ENCODE measurements at regions of chr7 and their contacts with region 1.

Region 1: DNA sequence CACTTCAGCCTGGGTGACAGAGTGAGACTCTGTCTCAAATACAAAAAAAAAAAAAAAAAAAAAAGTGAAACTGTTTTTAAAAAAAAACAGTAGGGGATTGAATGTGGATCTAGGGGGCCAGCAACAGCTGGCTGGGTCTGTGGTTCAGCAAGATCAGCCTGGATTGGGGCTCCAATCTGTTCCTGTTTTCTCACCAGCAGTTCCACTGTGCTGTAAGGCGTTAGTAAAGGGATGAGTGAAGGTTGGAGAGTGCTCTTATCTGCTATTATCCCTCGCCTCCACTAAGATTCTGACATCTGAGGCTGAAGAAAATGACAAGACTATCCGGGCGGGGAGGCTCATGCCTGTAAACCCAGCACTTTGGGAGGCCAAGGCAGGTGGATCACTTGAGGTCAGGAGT is 41.6 kb upstream of the GTF2IRD1 start:
- DNase-seq: no peak
- ATAC-seq: no peak
- H3K4me3 Mint-ChIP-seq: no peak overlapping the region
- H3K27ac Mint-ChIP-seq: no peak overlapping the region
- H3K4me1 Mint-ChIP-seq: no peaks in the 10 kb centered on the region
- H3K27me3 Mint-ChIP-seq: no peaks in the 10 kb centered on the region

Region 2: DNA sequence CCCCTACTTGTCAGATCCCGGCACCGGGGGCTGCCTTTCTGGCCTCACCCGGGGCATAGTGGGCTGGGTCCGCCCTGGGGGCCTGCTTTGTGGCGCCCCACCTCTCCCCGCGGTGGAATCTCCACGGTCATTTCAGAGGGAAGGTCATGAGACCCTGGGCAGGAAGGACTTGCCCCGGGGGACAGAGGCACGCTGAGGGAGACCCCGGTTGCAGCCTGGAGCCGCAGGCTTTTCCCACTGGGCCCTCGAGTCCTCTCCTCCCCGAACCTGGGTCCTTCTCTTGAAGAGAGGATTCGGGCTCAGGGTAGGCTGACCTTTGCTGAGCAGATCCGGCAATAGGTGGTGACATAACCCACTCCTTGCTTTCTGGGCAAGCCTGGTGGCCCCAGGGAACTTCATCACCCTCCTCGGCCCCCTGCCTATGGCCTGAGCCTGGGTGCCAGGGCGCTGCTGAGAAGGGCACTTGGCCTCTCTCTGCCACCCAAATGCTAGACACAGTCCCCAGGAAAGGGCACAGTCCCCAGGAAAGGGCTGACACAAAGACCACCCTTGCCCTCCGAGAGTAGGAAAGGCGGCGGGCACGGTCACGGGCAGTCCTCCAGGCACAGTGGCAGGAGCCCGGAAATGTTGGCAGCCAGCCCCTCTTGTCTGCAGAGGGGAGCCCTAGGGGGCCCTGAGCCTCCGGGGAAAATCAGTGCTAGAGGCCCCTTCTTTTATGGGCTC is 1047.9 kb before region 1 on chr7:
- CTCF ChIA-PET with region 1: no interaction called
- POLR2A ChIA-PET with region 1: no interaction called
- intact Hi-C with region 1: no loop called
- DNase-seq: no peak
- ATAC-seq: no peak
- H3K4me3 Mint-ChIP-seq: no peak overlapping the region
- H3K27ac Mint-ChIP-seq: no peak overlapping the region
- H3K4me1 Mint-ChIP-seq: no peaks in the 10 kb centered on the region
- H3K27me3 Mint-ChIP-seq: peaks cover 3% of the 10 kb centered on the region

Region 3: DNA sequence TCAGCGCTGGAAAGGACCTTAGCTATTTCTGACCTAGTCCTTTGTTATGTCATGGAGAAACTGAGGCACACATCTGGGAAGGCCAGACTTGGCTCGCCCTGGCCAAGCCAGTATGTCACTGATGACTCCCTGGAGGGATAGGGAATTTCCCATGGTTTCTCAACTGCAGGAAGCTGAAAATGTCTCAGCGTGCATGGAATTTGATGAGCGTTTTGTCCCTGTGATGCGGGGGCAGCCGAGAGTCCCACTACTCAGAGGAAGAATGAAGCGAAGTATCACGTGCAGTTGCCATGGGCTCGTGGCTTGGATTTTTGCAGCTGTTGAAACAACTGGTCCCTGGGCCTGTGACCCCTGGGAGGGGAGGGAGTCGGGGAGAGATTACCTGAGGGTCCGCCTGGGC is 78.0 kb before region 1 on chr7:
- CTCF ChIA-PET with region 1: no interaction called
- POLR2A ChIA-PET with region 1: no interaction called
- intact Hi-C with region 1: no loop called
- DNase-seq: no peak
- ATAC-seq: no peak
- H3K4me3 Mint-ChIP-seq: no peak overlapping the region
- H3K27ac Mint-ChIP-seq: no peak overlapping the region
- H3K4me1 Mint-ChIP-seq: no peaks in the 10 kb centered on the region
- H3K27me3 Mint-ChIP-seq: no peaks in the 10 kb centered on the region

Region 4: DNA sequence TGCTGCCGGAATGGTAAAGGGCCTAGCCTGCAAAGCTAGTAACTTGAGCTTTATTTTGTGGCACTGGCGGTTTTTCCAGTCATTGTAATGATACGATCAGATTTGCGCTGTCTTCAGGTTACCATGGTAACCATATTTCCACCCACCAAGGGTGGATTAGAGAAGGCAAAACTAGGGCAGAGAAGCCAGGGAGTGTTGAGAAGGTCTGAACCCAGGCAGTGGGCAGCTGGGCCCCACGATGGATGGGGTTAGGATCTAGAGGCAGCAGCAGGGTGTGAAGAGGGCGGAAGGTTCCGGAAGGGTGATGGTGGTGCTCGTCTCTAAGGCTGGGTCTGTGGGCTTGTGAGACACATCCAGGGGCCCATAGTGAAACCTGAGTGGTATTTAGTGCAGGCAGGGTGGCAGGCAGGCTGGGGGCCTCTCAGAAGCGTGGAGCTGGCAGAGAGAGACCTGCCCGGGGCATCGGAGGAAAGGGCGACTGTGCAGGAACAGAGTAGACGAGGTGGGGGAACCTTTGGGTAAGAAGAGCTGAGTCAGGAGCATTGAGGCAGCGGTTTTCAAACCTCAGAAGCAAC is 157.5 kb after region 1 on chr7:
- CTCF ChIA-PET with region 1: interaction called, 18 read pairs
- POLR2A ChIA-PET with region 1: no interaction called
- intact Hi-C with region 1: loop called (anchors 1 kb)
- DNase-seq: peak; percentile 55
- ATAC-seq: peak; percentile 71
- H3K4me3 Mint-ChIP-seq: no peak overlapping the region
- H3K27ac Mint-ChIP-seq: peak overlapping the region; percentile 63
- H3K4me1 Mint-ChIP-seq: peaks cover 15% of the 10 kb centered on the region
- H3K27me3 Mint-ChIP-seq: no peaks in the 10 kb centered on the region

Measured in activated CD4-positive, alpha-beta T cell treated with anti-CD3 and anti-CD28 coated beads for 36 hours (primary cell).